Naive thymus-derived CD4-positive, alpha-beta T cell (primary cell): ENCODE measurements at regions of chr1 and their contacts with region 1.

Region 1: DNA sequence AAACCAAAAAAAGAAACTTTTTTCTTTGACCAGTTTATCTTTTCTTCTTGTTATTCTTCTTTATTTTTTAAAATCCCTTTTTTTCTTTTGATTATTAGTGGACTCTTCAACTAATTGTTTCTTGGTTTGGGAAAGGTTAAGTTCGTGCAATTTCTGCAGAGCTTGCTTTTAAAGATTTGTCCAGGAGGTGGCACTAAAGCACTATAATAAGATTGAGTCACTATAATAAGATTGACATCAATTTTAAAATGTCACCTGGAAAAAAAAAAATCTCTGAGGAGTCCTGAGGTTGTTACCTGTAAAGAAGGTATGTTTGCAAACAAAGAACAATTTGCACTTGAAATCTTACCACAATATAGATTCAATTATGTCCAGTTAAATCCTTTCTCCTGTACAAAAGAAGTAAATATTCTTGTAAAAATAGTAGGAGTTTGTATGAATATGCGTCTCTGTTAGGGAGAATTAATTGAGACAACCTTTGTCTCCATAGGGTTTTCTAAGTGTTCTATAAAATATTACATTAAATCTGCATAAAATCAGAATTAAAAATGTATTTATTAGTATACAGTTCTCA is 166.7 kb downstream of the ADGRL4 start:
- DNase-seq: peak in 6 of 9 donors; percentile 13 to 32 (median 24)
- ATAC-seq: no peak
- H3K4me3 ChIP-seq: no peak overlapping the region
- H3K4me3 Mint-ChIP-seq: no peak overlapping the region
- H3K27ac ChIP-seq: no peak overlapping the region
- H3K27ac Mint-ChIP-seq: no peak overlapping the region
- H3K4me1 ChIP-seq: peaks cover 0 to 5% of the 10 kb centered on the region in 2 donors
- H3K4me1 Mint-ChIP-seq: peaks cover 6 to 17% (median 12%) of the 10 kb centered on the region in 7 donors
- H3K27me3 ChIP-seq: no peaks in the 10 kb centered on the region
- H3K27me3 Mint-ChIP-seq: peaks cover 0 to 6% (median 0%) of the 10 kb centered on the region in 5 donors

Region 2: GRCh38 chr1:79353224-79353623 is 513.4 kb after region 1 on chr1:
- CTCF ChIA-PET with region 1: no interaction called
- POLR2A ChIA-PET with region 1: no interaction called
- intact Hi-C with region 1: loop called (anchors 1 to 2 kb)
- DNase-seq: no peak
- ATAC-seq: no peak
- H3K4me3 ChIP-seq: no peak overlapping the region
- H3K4me3 Mint-ChIP-seq: no peak overlapping the region
- H3K27ac ChIP-seq: no peak overlapping the region
- H3K27ac Mint-ChIP-seq: no peak overlapping the region
- H3K4me1 ChIP-seq: no peaks in the 10 kb centered on the region
- H3K4me1 Mint-ChIP-seq: no peaks in the 10 kb centered on the region
- H3K27me3 ChIP-seq: no peaks in the 10 kb centered on the region
- H3K27me3 Mint-ChIP-seq: no peaks in the 10 kb centered on the region